CD8-positive, alpha-beta T cell (primary cell): ENCODE measurements at regions of chr18 and their contacts with region 1.

Region 1: GRCh38 chr18:50356036-50356945 is 18.6 kb upstream of the SKA1 start:
- DNase-seq: peak in 2 of 9 experiments; percentile 27 to 37
- ATAC-seq: peak; percentile 27
- H3K4me3 ChIP-seq: no peak overlapping the region
- H3K4me3 Mint-ChIP-seq: peak overlapping the region; percentile 33
- H3K27ac ChIP-seq: no peak overlapping the region
- H3K27ac Mint-ChIP-seq: peak overlapping the region; percentile 10
- H3K4me1 ChIP-seq: peaks cover 6% of the 10 kb centered on the region
- H3K4me1 Mint-ChIP-seq: peaks cover 8% of the 10 kb centered on the region
- H3K27me3 ChIP-seq: no peaks in the 10 kb centered on the region
- H3K27me3 Mint-ChIP-seq: peaks cover 23% of the 10 kb centered on the region
- CTCF ChIP-seq: no peak

Region 2: DNA sequence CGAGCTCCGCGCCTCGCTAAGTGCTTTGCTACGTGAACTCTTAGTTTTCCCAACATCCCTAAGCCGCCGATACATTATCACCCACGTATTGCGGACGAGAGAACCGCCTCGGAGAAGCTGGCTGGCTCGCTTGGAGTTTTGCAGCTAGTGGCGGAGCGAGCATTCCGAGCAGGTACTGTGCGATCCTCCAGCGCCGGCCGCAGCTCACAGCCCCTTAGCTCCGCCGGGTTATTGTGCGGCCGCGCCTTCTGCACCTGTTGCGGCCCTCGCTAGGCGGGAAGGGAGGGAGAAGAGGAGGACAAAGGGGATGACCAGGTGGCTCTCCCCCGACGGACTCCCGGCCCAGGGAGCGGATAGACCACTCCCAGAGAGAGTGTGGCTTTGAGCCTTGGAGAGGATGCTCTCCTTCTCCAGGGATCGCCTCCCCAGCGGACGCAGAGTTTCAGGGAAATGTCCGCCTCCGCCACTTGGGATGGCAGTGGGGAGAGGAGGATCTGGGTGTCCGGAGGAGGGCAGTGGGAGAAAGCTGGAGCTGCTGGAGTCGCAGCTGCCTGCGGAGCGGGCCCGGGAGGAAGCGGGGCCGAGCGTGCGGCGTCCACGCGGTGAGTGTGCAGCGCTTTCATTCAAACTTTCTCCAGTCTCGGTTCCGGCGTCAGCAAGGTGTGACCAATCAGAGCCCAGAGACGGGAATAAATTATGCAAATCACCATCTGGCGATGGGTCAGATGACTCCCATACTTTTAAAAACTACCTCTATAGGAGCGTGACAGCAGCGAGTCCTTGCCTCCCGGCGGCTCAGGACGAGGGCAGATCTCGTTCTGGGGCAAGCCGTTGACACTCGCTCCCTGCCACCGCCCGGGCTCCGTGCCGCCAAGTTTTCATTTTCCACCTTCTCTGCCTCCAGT is 794.8 kb before region 1 on chr18 and contains the start of gene LIPG:
- CTCF ChIA-PET with region 1: interaction called, 3 read pairs
- POLR2A ChIA-PET with region 1: no interaction called
- intact Hi-C with region 1: loop called in 1 of 2 experiments (anchors 5 kb)
- DNase-seq: peak in 4 of 9 experiments; percentile 18 to 67 (median 40)
- ATAC-seq: peak; percentile 75
- H3K4me3 ChIP-seq: peak within 1 kb of the TSS; percentile 38 to 62
- H3K4me3 Mint-ChIP-seq: peak within 1 kb of the TSS; percentile 75
- H3K27ac ChIP-seq: no peak within 1 kb of the TSS
- H3K27ac Mint-ChIP-seq: no peak within 1 kb of the TSS
- H3K4me1 ChIP-seq: peaks cover 21% of the 10 kb centered on the region
- H3K4me1 Mint-ChIP-seq: peaks cover 30% of the 10 kb centered on the region
- H3K27me3 ChIP-seq: peaks cover 23 to 37% of the 10 kb centered on the region in 2 experiments
- H3K27me3 Mint-ChIP-seq: peaks cover 64% of the 10 kb centered on the region
- CTCF ChIP-seq: no peak
- total RNA-seq, gene LIPG: not detected

Region 3: DNA sequence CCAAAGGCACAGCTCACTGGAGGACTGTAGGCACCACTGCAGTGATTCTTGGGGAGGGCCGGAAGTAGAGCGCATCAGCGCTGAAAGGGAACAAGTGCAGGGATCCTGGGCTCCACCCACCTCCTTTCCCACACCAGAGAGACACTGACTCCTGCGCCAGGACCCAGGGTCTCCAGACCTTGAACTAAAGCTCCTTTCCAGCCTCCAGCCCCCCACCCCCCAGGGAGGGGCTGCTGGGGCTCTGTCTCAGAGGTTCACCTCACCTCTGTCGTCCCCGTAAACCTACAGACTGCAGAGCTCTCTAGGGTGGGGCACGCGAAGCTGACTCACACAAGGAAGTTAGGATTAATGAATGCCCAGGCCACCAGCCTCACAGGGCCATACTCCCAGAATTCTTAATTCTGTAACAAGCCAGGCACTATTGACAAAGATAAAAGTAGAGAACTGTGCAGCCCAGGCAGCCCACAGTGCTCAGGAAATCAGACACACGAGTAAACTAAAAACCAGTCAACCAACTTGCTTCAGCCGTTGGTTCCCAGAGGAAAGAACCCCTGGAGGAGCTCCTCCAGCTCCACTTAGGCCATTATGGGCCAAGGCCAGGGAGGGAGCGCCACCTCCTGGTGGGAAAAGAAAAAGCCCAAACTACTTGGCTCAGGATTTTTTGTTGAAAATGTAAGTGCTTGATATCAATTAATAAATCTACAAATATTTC is 497.8 kb before region 1 on chr18:
- CTCF ChIA-PET with region 1: interaction called, 11 read pairs
- POLR2A ChIA-PET with region 1: no interaction called
- intact Hi-C with region 1: loop called in 1 of 2 experiments (anchors 5 kb)
- DNase-seq: peak; percentile 13 to 71 (median 62)
- ATAC-seq: no peak
- H3K4me3 ChIP-seq: no peak overlapping the region
- H3K4me3 Mint-ChIP-seq: no peak overlapping the region
- H3K27ac ChIP-seq: no peak overlapping the region
- H3K27ac Mint-ChIP-seq: no peak overlapping the region
- H3K4me1 ChIP-seq: no peaks in the 10 kb centered on the region
- H3K4me1 Mint-ChIP-seq: no peaks in the 10 kb centered on the region
- H3K27me3 ChIP-seq: no peaks in the 10 kb centered on the region
- H3K27me3 Mint-ChIP-seq: peaks cover 2% of the 10 kb centered on the region
- CTCF ChIP-seq: peak; percentile 81

Region 4: DNA sequence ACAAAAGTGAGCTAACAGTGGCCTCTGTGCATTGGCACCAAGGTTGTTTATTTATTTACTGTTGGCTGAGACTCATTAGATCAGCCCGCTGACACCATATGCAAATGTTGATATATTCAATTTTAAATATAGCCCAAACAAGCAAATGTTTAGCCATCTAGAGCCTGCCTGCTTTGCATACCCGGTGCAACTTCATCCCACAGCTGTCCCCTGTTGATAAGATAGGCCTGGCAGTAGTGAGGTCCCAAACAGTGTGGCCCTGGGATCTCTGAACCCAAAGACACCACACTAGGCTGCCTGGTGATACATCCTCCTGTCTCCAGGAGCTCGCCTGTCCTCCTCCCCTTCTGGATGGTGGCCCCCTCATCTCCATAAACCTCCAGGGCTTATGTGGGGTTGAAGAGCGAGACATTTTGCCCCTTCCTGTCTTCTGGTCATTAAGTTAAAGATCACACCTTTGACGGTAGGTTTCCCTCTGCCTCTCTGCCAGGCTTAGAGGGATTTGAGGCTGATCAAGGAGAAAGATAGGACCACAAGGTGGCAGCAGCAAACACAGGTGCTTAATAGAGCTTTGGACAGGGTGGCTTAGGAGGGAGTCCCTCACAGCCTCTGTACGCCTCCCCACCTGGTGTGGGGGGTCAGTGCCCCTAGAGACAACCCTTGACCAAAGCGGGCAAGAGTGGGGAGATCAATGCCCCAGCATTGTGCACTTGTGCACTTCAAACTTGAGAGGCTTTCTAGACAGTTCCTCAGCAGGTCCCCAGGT is 137.7 kb before region 1 on chr18:
- CTCF ChIA-PET with region 1: interaction called, 82 read pairs
- POLR2A ChIA-PET with region 1: no interaction called
- intact Hi-C with region 1: loop called in 1 of 2 experiments (anchors 1 kb)
- DNase-seq: peak in 7 of 9 experiments; percentile 6 to 65 (median 39)
- ATAC-seq: no peak
- H3K4me3 ChIP-seq: no peak overlapping the region
- H3K4me3 Mint-ChIP-seq: no peak overlapping the region
- H3K27ac ChIP-seq: no peak overlapping the region
- H3K27ac Mint-ChIP-seq: no peak overlapping the region
- H3K4me1 ChIP-seq: no peaks in the 10 kb centered on the region
- H3K4me1 Mint-ChIP-seq: no peaks in the 10 kb centered on the region
- H3K27me3 ChIP-seq: peaks cover 0 to 3% of the 10 kb centered on the region in 2 experiments
- H3K27me3 Mint-ChIP-seq: peaks cover 26% of the 10 kb centered on the region
- CTCF ChIP-seq: no peak

Region 5: GRCh38 chr18:50281295-50281971 is 74.9 kb before region 1 on chr18 and contains the start of gene MBD1:
- CTCF ChIA-PET with region 1: interaction called, 7 read pairs
- POLR2A ChIA-PET with region 1: interaction called, 8 read pairs
- intact Hi-C with region 1: loop called (anchors 1 to 5 kb)
- DNase-seq: peak; percentile 93 to 99 (median 97)
- ATAC-seq: peak; percentile 92
- H3K4me3 ChIP-seq: peak within 1 kb of the TSS; percentile 80 to 90
- H3K4me3 Mint-ChIP-seq: peak within 1 kb of the TSS; percentile 98
- H3K27ac ChIP-seq: peak within 1 kb of the TSS; percentile 81 to 90
- H3K27ac Mint-ChIP-seq: peak within 1 kb of the TSS; percentile 96
- H3K4me1 ChIP-seq: peaks cover 38% of the 10 kb centered on the region
- H3K4me1 Mint-ChIP-seq: peaks cover 49% of the 10 kb centered on the region
- H3K27me3 ChIP-seq: no peaks in the 10 kb centered on the region
- H3K27me3 Mint-ChIP-seq: no peaks in the 10 kb centered on the region
- CTCF ChIP-seq: no peak
- total RNA-seq, gene MBD1: 88.5 to 96.0 TPM

Region 6: DNA sequence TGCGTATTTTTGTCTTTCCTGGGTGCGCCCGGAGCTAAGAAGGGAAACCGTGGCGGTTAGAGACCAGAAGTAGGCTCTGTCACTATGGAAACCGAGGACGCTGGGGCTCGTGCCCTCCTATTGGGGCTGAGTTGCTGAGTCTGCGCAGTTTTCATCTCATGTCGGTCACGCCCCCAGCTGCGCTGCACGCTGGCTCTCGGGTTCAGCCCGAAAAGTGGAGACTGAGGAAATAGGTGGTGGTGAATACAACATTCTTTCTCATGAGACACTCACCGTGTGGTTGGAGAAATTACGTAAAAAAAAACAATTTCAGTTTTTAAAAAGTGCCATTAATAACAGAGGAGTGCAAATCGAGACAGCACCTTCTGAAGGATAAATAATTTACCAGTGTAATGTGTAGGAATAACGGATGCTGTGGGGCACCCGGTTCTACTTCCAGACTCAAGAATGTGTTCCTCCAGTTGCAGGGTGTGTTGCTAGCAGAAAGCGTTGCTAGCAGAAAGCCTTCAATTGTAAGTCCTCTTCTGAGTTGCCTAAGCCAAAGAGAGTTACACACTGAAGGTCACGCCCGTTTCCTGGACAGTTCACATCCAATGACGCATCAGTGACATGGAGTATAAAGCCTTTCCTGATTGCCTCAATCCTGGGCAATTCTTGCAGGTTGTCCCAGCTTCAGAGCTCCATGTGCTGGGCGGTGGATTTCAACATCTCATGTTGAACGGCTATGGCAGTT is 48.4 kb before region 1 on chr18:
- CTCF ChIA-PET with region 1: interaction called, 12 read pairs
- POLR2A ChIA-PET with region 1: no interaction called
- intact Hi-C with region 1: no loop called
- DNase-seq: peak; percentile 75 to 96 (median 91)
- ATAC-seq: peak; percentile 99
- H3K4me3 ChIP-seq: peak overlapping the region; percentile 52 to 59
- H3K4me3 Mint-ChIP-seq: peak overlapping the region; percentile 96
- H3K27ac ChIP-seq: peak overlapping the region; percentile 24 to 41
- H3K27ac Mint-ChIP-seq: peak overlapping the region; percentile 63
- H3K4me1 ChIP-seq: peaks cover 6% of the 10 kb centered on the region
- H3K4me1 Mint-ChIP-seq: peaks cover 20% of the 10 kb centered on the region
- H3K27me3 ChIP-seq: peaks cover 0 to 4% of the 10 kb centered on the region in 2 experiments
- H3K27me3 Mint-ChIP-seq: peaks cover 12% of the 10 kb centered on the region
- CTCF ChIP-seq: no peak

Region 7: DNA sequence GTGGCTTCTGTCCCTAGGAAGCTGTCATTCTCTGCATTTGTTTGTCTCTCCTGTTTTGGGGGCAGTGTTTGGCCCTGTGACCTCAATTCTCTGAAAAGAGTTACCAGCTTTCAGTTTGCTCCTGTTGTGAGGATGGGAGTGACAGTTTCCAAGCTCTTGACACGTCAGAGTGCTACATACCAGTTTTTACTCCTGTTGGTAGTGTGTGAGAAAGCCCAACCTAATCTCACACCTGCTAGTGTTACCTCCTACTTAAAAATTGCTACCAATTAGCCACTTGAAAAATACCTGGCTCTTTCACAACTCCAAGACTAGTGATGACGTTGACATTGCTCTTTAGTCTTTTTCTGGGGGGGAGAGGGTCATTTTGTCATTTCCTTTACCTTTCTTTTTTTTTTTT is 32.7 kb after region 1 on chr18:
- CTCF ChIA-PET with region 1: interaction called, 13 read pairs
- POLR2A ChIA-PET with region 1: no interaction called
- intact Hi-C with region 1: no loop called
- DNase-seq: no peak
- ATAC-seq: no peak
- H3K4me3 ChIP-seq: no peak overlapping the region
- H3K4me3 Mint-ChIP-seq: no peak overlapping the region
- H3K27ac ChIP-seq: no peak overlapping the region
- H3K27ac Mint-ChIP-seq: no peak overlapping the region
- H3K4me1 ChIP-seq: no peaks in the 10 kb centered on the region
- H3K4me1 Mint-ChIP-seq: no peaks in the 10 kb centered on the region
- H3K27me3 ChIP-seq: no peaks in the 10 kb centered on the region
- H3K27me3 Mint-ChIP-seq: no peaks in the 10 kb centered on the region
- CTCF ChIP-seq: no peak